ENCODE measurements at regions of chrX and their contacts with region 1.

Region 1: DNA sequence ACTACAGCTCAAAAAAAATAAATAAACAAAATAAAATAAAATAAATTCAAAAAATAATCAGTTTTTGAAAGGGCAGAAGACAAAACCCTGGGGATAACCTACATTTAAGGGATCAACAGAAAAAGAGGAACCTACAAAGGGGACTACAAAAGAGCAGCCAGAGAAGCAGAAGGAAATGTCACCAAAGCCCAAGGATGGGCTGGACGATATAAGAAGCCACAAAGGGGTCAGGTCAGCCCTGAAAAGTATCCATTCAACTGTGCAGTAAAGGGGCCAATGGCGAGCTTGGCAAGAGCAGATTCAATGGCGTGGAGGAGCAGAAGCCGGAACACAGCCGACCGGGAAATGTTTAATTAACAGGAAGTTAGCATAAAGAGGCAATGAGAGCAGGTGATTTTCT is 16.9 kb downstream of the ACOT9 start:
- DNase-seq: no peak
- H3K4me3 Mint-ChIP-seq: no peak overlapping the region
- H3K27ac Mint-ChIP-seq: no peak overlapping the region
- H3K4me1 Mint-ChIP-seq: peaks cover 5% of the 10 kb centered on the region
- H3K27me3 Mint-ChIP-seq: peaks cover 40% of the 10 kb centered on the region
- CTCF ChIP-seq: no peak

Region 2: GRCh38 chrX:23737413-23737812 is 11.2 kb after region 1 on chrX:
- CTCF ChIA-PET with region 1: interaction called, 11 read pairs
- POLR2A ChIA-PET with region 1: no interaction called
- intact Hi-C with region 1: no loop called
- DNase-seq: peak; percentile 33
- H3K4me3 Mint-ChIP-seq: no peak overlapping the region
- H3K27ac Mint-ChIP-seq: no peak overlapping the region
- H3K4me1 Mint-ChIP-seq: peaks cover 13% of the 10 kb centered on the region
- H3K27me3 Mint-ChIP-seq: peaks cover 10% of the 10 kb centered on the region
- CTCF ChIP-seq: no peak

Region 3: DNA sequence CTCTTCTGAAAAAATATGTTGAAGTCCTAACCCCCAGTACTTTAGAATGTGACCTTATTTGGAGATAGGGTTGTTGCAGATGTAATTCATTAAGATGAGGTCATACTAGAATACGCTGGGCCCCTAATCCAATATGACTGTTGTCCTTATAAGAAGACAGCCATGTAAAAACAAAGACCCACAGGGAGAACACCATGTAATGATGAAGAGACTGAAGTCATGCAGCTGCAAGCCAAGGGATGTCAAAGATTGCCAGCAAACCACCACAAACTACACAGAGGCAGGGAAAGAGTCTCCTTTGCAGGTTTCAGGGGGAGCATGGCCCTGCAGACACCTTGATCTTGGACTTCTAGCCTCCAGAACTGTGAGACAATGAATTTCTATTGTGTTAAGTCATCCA is 219.0 kb after region 1 on chrX:
- CTCF ChIA-PET with region 1: no interaction called
- POLR2A ChIA-PET with region 1: no interaction called
- intact Hi-C with region 1: no loop called
- DNase-seq: no peak
- H3K4me3 Mint-ChIP-seq: no peak overlapping the region
- H3K27ac Mint-ChIP-seq: no peak overlapping the region
- H3K4me1 Mint-ChIP-seq: no peaks in the 10 kb centered on the region
- H3K27me3 Mint-ChIP-seq: peaks cover 71% of the 10 kb centered on the region
- CTCF ChIP-seq: no peak

Measured in MCF 10A (cell line).